ENCODE measurements at regions of chr5 and their contacts with region 1.

Region 1: GRCh38 chr5:82165740-82166530 is 112.2 kb downstream of the RPS23 start:
- DNase-seq: no peak
- H3K4me3 ChIP-seq: no peak overlapping the region
- H3K27me3 ChIP-seq: no peaks in the 10 kb centered on the region
- CTCF ChIP-seq: peak; percentile 69

Region 2: DNA sequence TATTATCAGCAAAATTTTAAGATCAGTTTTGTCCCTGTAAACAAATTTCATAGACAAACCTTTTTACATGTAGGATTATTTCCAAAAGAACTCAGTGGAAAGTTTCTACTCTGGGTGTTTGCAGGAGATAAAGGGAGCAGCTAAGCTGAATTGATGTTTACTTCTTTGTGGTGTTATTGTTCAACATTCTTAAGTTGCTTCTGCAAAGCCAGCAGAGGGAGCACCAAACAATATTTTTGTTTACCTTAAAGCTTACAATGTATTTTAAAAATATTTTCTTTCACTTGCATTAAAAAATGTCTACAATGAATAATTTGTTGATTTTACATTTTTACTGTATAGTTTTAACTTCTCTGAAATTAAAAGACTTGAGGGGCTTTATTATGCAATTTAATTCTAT is 58.7 kb before region 1 on chr5:
- CTCF ChIA-PET with region 1: interaction called, 30 read pairs
- POLR2A ChIA-PET with region 1: no interaction called
- DNase-seq: no peak
- H3K4me3 ChIP-seq: no peak overlapping the region
- H3K27me3 ChIP-seq: no peaks in the 10 kb centered on the region
- CTCF ChIP-seq: peak; percentile 53

Region 3: DNA sequence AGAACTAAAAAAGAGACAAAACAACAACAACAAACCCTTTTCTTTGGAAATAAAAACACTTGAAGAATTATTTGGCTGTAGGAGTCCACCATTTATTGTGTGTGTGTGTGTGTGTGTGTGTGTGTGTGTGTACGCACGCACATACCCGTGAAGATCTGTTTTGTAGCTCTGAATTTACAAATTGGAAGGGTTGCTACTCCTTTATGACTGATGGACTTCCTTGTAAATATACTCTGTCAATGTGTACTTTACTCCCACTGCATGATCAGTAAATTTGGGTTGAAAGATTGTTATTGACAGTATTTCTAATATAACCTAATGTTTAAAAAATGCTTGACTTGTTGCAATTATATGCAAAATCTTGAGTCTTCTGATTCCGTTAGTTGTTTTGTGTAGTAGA is 46.0 kb before region 1 on chr5:
- CTCF ChIA-PET with region 1: no interaction called
- POLR2A ChIA-PET with region 1: no interaction called
- DNase-seq: no peak
- H3K4me3 ChIP-seq: no peak overlapping the region
- H3K27me3 ChIP-seq: no peaks in the 10 kb centered on the region
- CTCF ChIP-seq: no peak

Region 4: DNA sequence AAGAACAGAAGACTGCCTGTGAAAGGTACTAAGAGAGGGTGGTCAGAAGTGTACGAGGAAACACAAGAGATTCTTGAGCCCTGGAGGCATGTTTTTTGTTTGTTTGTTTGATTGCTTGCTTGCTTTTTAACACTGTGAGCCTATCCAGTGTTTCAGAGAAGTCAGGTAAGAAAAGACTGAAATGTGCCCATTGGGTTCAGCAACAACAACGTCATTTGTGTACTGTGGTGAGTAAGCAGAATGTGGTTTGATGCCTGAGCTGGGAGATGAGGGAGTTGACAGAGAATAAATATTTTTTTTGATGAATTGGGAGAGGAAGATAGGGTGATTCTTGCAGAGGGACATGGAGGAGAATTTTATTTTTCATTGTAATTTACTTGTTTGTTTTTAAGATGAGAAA is 39.1 kb after region 1 on chr5:
- CTCF ChIA-PET with region 1: no interaction called
- POLR2A ChIA-PET with region 1: interaction called, 13 read pairs
- DNase-seq: no peak
- H3K4me3 ChIP-seq: no peak overlapping the region
- H3K27me3 ChIP-seq: no peaks in the 10 kb centered on the region
- CTCF ChIP-seq: no peak

Region 5: GRCh38 chr5:82735160-82735789 is 569.3 kb after region 1 on chr5:
- CTCF ChIA-PET with region 1: no interaction called
- POLR2A ChIA-PET with region 1: no interaction called
- DNase-seq: no peak
- H3K4me3 ChIP-seq: no peak overlapping the region
- H3K27me3 ChIP-seq: no peaks in the 10 kb centered on the region
- CTCF ChIP-seq: no peak

Measured in BJ (cell line).